ENCODE measurements at regions of chr6 and their contacts with region 1.

Region 1: DNA sequence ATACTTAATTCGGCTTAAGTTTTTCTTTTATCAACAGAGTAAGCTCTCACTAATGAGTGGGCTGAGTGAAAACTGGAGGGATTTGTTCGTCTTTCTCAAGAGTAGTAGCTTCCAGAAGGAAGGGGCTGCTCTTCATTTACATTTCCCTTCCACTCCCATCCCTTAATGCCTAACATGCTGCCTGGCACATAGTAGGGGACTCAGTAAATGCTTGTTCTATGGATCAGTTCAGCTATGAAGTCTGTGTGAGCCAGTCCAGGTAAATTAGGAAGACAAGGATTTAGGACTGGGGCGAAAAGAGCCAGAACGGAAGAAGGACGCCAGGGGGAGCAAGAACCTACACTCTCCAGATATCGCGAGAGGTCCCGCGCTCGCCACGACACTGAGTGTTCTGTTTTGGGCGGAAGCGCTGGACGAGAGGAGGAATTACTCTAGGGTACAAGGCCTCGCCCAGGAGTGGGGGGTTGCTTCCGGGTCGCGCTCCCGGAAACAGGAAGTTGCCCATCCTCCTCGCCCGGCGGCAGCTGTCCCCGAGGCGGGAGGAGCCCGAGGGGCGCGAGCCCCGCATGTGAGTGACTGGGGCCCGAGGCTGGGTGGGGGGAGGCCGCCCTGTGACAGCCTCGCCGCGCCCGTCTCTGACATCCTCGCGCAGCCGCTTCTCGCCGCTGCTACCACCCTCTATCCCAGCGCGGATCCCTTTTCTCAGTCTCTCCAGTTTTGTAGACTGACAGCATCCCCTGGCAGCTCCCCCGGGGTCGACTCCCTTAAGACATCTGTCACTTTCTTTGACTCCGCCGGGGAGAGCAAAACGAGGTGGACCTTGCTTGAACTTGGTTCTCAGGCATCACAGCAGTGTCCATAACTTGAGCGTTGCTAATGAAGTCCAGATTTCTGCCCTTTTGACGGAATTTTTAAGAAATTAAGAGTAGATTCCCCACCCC is at the start of gene C6orf89:
- DNase-seq: peak; percentile 98
- H3K4me3 Mint-ChIP-seq: peak within 1 kb of the TSS; percentile 89
- H3K27ac Mint-ChIP-seq: peak within 1 kb of the TSS; percentile 76
- H3K4me1 Mint-ChIP-seq: peaks cover 36% of the 10 kb centered on the region
- H3K27me3 Mint-ChIP-seq: no peaks in the 10 kb centered on the region
- total RNA-seq, gene C6orf89: 51.8 to 53.8 TPM

Region 2: GRCh38 chr6:36912586-36912985 is 26.9 kb after region 1 on chr6:
- CTCF ChIA-PET with region 1: interaction called, 18 read pairs
- POLR2A ChIA-PET with region 1: interaction called, 14 read pairs
- DNase-seq: peak; percentile 80
- H3K4me3 Mint-ChIP-seq: peak overlapping the region; percentile 68
- H3K27ac Mint-ChIP-seq: peak overlapping the region; percentile 90
- H3K4me1 Mint-ChIP-seq: peaks cover 60% of the 10 kb centered on the region
- H3K27me3 Mint-ChIP-seq: no peaks in the 10 kb centered on the region

Region 3: DNA sequence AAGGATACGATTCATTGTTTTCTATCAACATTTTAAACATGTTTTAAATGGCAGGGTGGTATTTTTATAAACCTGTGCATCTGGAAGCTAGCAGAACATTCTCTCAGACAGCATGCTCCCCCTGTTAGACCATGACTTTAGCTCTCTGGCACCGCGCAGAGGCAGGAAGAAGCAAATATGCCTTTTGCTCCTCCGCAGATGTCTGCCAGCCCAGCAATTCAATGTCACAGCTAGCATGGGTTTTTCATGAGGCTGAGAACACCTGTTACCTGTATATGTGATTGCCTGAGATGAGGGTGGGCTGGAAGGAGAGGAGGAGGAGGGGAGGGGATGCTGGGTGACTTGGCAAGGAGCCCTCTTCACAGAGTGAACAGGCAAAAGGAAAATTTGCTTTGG is 93.6 kb after region 1 on chr6:
- CTCF ChIA-PET with region 1: interaction called, 10 read pairs
- POLR2A ChIA-PET with region 1: interaction called, 6 read pairs
- DNase-seq: peak; percentile 45
- H3K4me3 Mint-ChIP-seq: no peak overlapping the region
- H3K27ac Mint-ChIP-seq: peak overlapping the region; percentile 18
- H3K4me1 Mint-ChIP-seq: peaks cover 27% of the 10 kb centered on the region
- H3K27me3 Mint-ChIP-seq: no peaks in the 10 kb centered on the region

Measured in activated CD4-positive, alpha-beta memory T cell treated with anti-CD3 and anti-CD28 coated beads, Interleukin-2, amount 10 ng/mL, durations not matched to agents 7 days and 5 days (primary cell).